BJ (cell line): ENCODE measurements at regions of chr6 and their contacts with region 1.

Region 1: GRCh38 chr6:112010328-112010727 is 43.6 kb upstream of the CCN6 start:
- DNase-seq: no peak
- H3K4me3 ChIP-seq: no peak overlapping the region
- H3K27me3 ChIP-seq: no peaks in the 10 kb centered on the region
- CTCF ChIP-seq: no peak

Region 2: GRCh38 chr6:111997078-111997852 is 13.1 kb before region 1 on chr6:
- CTCF ChIA-PET with region 1: interaction called, 13 read pairs
- POLR2A ChIA-PET with region 1: no interaction called
- DNase-seq: no peak
- H3K4me3 ChIP-seq: no peak overlapping the region
- H3K27me3 ChIP-seq: no peaks in the 10 kb centered on the region
- CTCF ChIP-seq: peak; percentile 86

Region 3: DNA sequence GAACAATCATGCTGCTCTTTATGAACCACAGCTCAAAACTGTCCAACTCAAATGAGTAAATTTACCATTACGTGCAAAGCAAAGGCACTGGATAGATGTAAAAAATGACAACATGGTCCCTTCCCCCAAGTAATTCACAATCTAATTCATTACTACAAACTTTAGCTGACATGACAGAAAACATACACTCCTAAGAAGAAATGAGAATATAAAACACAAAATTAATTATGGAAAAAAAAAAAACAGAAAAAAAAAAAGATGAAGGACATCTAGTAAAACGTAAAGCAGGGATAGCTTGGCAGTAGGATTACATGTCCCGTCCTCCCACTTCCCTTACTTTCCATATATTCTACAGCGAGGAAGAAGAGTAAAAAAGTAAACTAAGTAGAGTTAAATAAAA is 71.2 kb after region 1 on chr6:
- CTCF ChIA-PET with region 1: no interaction called
- POLR2A ChIA-PET with region 1: no interaction called
- DNase-seq: no peak
- H3K4me3 ChIP-seq: no peak overlapping the region
- H3K27me3 ChIP-seq: no peaks in the 10 kb centered on the region
- CTCF ChIP-seq: no peak